ENCODE measurements at regions of chr10 and their contacts with region 1.

Region 1: DNA sequence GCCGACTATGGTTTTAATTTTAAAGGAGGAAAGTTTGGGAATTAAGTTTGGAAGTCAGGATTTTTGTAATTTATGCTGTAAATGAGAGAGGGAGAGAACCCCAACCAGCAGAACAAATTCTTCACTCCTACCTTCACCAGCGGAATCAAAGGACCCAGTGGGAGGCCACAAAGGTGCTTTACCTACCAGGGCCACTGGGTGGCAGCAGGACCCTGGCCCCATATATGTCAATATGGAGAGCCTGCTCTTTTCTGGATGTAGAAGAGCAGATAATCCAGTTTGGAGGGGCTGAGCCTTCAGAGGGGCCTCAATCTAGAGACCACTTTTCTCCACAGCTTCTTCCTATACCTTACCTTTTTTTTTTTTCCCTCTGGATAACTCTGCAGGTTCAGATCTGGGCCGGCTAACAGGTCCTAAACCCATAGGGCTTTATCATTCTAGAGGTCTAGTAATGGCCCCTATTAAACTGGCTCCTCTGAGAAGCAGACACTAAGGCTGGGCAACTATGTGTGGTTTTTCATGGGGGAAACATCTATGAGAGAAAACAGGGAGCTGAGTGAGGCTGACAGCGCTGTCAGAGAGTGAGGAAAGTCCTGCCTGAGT is 8.5 kb upstream of the SCD start:
- DNase-seq: peak; percentile 81
- CTCF ChIP-seq: peak; percentile 89

Region 2: DNA sequence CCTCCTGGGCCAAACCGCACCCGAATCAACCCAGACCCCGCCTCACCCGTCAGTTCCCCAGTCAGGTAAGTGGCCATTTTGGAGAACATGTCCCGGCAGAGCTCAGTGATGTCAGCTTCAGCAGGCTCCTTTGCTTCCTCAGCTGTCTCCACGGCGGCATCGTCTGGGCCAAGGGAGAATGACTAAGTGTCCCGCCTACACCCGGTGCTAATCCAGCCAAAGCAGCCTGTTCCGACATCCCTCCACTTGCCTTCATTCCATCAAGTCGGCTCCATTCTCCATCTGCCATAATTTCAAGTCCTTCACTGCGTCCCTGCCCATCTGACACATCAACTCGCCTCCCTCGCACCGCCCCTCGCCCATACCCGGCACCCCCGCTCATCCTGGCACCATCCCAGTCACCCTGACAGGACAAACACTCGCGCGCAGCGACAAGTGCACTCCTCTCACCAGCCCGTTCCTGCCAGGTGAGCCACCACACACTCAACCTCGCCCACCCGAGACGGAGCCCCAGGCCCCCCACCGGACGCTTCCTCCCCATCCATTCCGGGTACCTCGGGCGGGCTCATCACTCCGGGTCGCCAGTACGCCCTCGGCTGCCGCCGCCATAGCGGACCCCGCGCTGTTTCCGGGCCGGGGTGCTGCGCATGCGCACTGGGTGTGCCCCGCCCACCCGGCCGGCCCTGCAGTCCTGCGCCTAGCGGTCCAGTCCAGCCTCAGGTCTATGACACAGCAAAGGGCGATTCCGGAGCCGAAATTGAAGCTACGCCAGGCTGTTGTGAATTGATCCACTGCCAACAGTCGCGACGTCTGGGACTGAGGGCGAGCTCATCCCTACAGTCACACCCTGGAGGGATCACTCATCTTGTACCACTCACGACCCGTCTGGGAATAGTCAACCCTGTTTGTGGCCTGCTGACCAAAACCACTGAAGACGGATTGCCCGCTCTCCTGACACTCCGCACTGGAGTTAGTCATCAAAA is 52.2 kb before region 1 on chr10 and contains the start of gene BLOC1S2:
- CTCF ChIA-PET with region 1: no interaction called
- POLR2A ChIA-PET with region 1: no interaction called
- DNase-seq: peak; percentile 98
- CTCF ChIP-seq: peak; percentile 16

Region 3: GRCh38 chr10:100327007-100327717 is 11.4 kb before region 1 on chr10:
- CTCF ChIA-PET with region 1: interaction called, 70 read pairs
- POLR2A ChIA-PET with region 1: no interaction called
- DNase-seq: peak; percentile 84
- CTCF ChIP-seq: no peak

Region 4: GRCh38 chr10:100373298-100374136 is 35.0 kb after region 1 on chr10:
- CTCF ChIA-PET with region 1: interaction called, 11 read pairs
- POLR2A ChIA-PET with region 1: no interaction called
- DNase-seq: peak; percentile 94
- CTCF ChIP-seq: no peak

Measured in GM10248 (cell line).